ENCODE measurements at regions of chr11 and their contacts with region 1.

Region 1: DNA sequence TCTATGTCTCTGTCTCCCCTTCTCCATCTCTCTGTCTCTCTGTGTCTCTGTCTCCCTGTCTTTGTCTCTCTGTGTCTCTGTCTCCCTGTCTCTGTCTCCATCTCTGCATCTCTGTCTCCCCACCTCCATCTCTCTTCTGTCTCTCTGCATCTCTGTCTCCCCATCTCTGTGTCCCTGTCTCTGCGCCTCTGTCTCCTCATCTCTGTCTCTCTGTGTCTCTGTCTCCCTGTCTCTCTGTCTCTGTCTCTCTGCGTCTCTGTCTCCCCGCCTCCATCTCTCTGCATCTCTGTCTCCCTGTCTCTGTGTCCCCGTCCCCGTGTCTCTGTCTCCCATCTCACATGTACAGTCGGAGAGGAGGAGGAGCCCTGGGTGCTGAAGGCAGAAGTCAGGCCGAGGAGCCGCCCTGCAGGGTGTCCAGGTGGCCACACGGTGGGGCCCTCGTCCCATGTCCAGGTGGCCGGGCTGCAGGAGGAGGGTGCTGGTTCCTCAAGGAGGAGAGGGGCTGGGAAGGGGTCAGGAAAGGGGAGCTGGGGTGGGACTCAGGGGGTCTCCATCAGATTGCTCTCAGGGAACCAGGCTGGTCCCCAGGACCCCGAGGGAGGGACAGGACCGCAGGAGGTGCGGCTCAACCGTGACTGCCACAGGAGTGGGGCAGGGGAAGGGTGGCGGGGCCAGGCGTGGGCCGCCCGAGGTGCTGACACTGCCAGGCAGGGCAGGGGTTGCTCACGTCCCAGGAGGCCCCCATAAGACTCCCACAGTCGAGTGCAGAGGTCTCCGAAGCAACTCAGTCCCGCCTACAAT is 25.6 kb upstream of the TH start:
- H3K4me3 Mint-ChIP-seq: no peak overlapping the region
- H3K27ac Mint-ChIP-seq: peak overlapping the region; percentile 0
- H3K4me1 Mint-ChIP-seq: peaks cover 6% of the 10 kb centered on the region
- H3K27me3 Mint-ChIP-seq: peaks cover 31% of the 10 kb centered on the region

Region 2: DNA sequence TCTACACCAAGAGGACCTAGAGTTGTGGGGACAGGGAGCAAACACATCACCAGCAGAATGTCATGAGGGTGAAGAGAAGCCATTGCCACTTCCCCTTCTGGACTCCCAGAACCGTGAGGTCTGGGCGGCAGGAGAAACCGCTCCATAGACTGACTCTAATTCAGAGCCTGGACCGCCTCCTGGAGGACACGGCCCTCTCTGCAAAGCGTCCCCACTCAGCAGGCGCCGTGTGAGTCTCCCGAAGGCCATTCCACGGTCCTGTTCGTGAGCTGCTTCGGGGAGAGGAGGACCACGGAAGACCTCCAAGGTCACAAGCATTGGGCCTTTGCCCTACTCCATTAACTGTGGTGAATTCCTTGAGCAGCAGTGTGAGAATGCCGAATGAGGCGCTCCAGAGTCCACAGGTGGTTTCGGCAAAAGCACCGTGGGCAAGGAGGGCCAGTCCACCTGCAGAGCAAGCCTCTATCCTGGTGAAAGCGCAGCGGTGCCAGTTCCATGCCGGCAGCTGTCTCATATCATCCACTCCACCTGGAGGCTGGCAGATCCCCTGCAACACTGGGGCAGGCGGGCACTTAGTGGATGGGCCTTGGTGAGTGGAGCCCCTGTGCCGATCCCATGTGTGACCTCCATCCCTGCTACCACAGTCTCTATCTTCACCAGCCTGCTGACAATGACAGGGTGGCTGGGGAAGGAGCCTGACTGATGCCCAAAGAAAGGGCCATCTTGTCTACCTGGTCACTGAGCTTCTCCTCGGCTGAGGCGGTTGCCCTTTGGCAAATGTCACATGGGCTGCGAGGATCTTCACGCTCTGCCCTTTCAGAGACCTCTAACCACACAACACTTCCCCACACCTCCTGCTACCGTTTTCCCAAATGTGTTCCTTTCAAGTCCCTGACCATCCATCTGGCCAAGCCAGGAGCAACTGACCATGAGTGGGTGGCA is 97.1 kb after region 1 on chr11:
- intact Hi-C with region 1: loop called (anchors 1 kb)
- H3K4me3 Mint-ChIP-seq: no peak overlapping the region
- H3K27ac Mint-ChIP-seq: peak overlapping the region; percentile 43
- H3K4me1 Mint-ChIP-seq: peaks cover 52% of the 10 kb centered on the region
- H3K27me3 Mint-ChIP-seq: peaks cover 31% of the 10 kb centered on the region

Region 3: GRCh38 chr11:2377511-2378443 is 180.6 kb after region 1 on chr11:
- intact Hi-C with region 1: no loop called
- H3K4me3 Mint-ChIP-seq: peak overlapping the region; percentile 86
- H3K27ac Mint-ChIP-seq: peak overlapping the region; percentile 88
- H3K4me1 Mint-ChIP-seq: peaks cover 54% of the 10 kb centered on the region
- H3K27me3 Mint-ChIP-seq: peaks cover 28% of the 10 kb centered on the region

Region 4: GRCh38 chr11:2400069-2400760 is 203.0 kb after region 1 on chr11 and contains the start of gene TSSC4:
- intact Hi-C with region 1: loop called (anchors 5 kb)
- H3K4me3 Mint-ChIP-seq: peak within 1 kb of the TSS; percentile 95
- H3K27ac Mint-ChIP-seq: peak within 1 kb of the TSS; percentile 93
- H3K4me1 Mint-ChIP-seq: peaks cover 33% of the 10 kb centered on the region
- H3K27me3 Mint-ChIP-seq: no peaks in the 10 kb centered on the region

Region 5: DNA sequence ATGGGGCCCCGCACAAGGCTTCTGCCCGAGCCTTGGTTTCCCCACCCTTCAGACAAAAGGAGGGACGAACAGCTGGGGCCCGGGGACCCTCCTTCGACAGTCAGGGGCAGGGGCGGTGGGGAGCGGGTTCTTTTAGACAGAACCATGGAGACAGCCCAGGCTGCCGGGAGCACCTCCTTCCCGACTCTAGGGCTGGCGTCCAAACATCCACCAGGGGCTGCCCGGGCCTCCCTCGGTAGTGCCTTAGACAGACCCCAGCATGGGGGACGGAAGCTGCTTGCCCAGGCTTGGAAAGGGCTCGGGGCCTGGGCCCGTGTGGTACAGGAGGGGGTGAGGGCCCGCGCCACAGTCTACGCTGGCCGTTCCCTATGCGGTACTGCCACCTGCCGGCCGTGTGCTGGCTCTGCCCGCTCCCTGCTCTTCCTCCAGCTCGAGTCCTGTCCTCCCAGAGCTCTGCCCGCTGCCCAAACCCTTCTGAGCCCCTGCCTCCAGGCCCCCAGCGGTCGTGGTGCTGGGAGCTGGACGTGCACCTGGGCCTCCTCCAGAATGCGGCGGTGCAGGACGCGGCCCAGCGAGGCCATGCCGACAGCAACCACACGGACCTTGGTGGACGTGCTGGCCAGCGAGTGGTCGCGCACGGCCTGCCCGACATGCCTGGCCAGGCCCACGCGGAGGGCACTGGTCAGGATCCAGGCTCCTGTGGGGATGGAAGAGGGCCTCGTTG is 223.5 kb after region 1 on chr11:
- intact Hi-C with region 1: loop called (anchors 2 kb)
- H3K4me3 Mint-ChIP-seq: no peak overlapping the region
- H3K27ac Mint-ChIP-seq: no peak overlapping the region
- H3K4me1 Mint-ChIP-seq: no peaks in the 10 kb centered on the region
- H3K27me3 Mint-ChIP-seq: peaks cover 42% of the 10 kb centered on the region

Region 6: DNA sequence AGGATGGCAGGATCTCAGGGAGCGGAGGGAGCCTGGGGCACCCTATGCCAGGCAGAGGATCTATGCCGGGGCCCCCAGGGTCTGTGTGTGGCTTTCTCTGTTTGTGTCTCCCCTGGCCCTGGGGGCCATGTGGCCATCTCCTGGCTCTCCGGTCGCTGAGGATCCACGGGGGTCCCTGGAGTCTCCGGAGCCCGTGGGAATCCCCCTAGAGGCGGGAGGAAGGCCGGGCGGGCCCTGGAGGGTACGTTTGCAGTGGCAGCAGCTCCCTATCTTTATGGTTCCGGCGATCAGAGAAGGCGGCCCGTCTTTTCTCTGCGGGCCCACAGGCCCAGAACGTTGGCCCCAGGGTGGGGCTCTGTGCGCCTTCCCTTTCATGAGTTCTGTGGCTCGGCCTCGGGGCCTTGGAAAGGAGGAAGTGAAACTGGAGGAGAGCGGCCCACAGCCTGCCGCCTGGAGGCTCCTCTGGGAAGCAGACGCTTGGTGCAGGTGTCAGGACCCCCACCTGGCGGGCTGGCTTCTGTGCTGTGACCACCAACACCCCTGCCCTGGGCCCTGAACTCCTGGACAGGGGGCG is 329.7 kb after region 1 on chr11:
- intact Hi-C with region 1: loop called (anchors 10 kb)
- H3K4me3 Mint-ChIP-seq: peak overlapping the region; percentile 71
- H3K27ac Mint-ChIP-seq: peak overlapping the region; percentile 92
- H3K4me1 Mint-ChIP-seq: peaks cover 68% of the 10 kb centered on the region
- H3K27me3 Mint-ChIP-seq: peaks cover 4% of the 10 kb centered on the region